ENCODE measurements at regions of chr19 and their contacts with region 1.

Region 1: GRCh38 chr19:44570984-44571684 is 41.7 kb upstream of the CEACAM20 start:
- DNase-seq: peak in 1 of 2 experiments; percentile 80
- H3K4me3 ChIP-seq: no peak overlapping the region
- H3K27ac ChIP-seq: no peak overlapping the region
- H3K4me1 ChIP-seq: no peaks in the 10 kb centered on the region
- H3K27me3 ChIP-seq: no peaks in the 10 kb centered on the region
- CTCF ChIP-seq: peak in 2 of 3 experiments; percentile 62 to 82; a peak in 3 of 4 replicates
- EP300 ChIP-seq: no peak
- POLR2A ChIP-seq: no peak
- RAD21 ChIP-seq: peak; percentile 80 to 89

Region 2: DNA sequence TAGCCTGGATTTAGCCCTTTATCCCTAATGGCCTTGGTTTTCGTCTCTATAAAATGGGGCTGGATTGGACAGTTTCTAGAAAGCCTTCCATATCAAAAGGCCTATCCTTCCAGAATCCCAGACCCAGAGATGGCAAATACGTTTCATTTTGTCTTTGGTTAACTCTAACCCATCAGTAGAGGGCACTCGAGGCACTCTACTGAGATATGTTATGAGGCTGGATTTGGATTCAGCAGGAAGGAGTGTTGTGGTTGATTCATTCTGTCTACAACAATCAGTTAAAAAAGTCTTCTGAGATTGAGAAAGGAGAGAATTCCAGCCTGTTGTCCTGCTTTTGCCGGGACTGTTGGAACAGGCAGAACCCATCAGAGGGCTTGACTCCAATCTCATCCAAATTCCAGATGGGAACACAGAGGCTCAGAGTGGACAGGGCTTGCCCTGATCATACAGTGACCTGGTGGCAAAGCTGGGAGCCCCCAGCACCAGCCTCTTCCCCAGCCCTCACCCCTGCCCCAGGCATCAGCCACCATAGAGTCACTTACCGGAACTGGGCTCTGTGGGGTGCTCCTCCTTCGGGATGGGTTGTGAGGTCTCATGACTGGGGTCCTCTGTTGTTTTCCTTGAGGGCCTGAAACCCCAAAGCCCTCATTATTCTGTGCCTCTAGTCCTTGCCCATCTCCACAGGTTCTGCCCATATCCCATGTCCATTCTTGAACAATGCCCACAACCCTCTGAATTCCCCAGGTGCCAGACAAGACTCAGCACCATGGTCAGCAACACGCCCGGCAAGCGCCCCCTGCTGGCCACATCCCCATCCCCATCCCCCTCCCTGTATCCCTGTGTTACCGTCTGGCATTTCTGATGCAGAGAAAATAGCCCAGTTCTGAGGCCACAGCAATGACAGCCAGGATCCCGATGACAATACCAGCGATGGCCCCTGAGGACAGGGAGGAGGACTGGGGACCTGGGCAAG is 58.5 kb before region 1 on chr19:
- CTCF ChIA-PET with region 1: no interaction called
- POLR2A ChIA-PET with region 1: no interaction called
- DNase-seq: peak; percentile 31 to 87
- H3K4me3 ChIP-seq: no peak overlapping the region
- H3K27ac ChIP-seq: no peak overlapping the region
- H3K4me1 ChIP-seq: no peaks in the 10 kb centered on the region
- H3K27me3 ChIP-seq: no peaks in the 10 kb centered on the region
- CTCF ChIP-seq: peak; percentile 68 to 89 (median 69)
- EP300 ChIP-seq: no peak
- POLR2A ChIP-seq: no peak
- RAD21 ChIP-seq: peak; percentile 41 to 61

Region 3: GRCh38 chr19:44552324-44552723 is 18.8 kb before region 1 on chr19:
- CTCF ChIA-PET with region 1: interaction called, 14 read pairs
- POLR2A ChIA-PET with region 1: no interaction called
- DNase-seq: peak; percentile 70 to 95
- H3K4me3 ChIP-seq: no peak overlapping the region
- H3K27ac ChIP-seq: no peak overlapping the region
- H3K4me1 ChIP-seq: no peaks in the 10 kb centered on the region
- H3K27me3 ChIP-seq: no peaks in the 10 kb centered on the region
- CTCF ChIP-seq: peak; percentile 87 to 99 (median 98)
- EP300 ChIP-seq: no peak
- POLR2A ChIP-seq: no peak
- RAD21 ChIP-seq: peak; percentile 63 to 74

Region 4: DNA sequence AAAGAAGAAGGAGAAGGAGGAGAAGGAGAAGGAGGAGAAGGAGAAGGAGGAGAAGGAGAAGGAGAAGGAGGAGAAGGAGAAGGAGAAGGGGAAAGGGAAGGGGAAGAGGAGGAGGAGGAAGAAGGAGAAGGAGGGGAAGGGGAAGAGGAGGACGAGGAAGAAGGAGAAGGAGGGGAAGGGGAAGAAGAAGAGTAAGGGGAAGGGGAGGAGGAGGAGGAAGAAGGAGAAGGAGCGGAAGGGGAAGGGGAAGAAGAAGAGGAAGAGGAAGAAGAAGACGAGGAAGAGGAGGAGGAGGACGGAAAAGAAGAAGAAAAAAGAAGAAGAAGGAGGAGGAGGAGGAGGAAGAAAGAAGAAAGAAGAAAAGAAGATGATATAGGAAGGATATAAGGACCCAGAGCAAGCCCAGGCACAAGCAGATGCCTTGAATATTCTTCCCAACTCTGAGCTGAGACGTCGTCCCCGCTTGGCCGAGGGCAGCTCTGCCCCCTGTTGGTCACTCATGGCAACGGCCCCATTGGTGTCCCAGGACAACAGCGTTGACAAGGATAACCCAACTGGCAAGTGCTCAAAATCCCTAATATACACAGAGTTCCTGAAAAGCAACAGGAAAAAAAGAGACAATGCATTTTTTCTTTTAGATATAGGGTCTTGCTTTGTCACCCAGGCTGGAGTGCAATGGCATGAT is 11.6 kb after region 1 on chr19:
- CTCF ChIA-PET with region 1: interaction called, 37 read pairs
- POLR2A ChIA-PET with region 1: interaction called, 5 read pairs
- DNase-seq: peak; percentile 50 to 91
- H3K4me3 ChIP-seq: no peak overlapping the region
- H3K27ac ChIP-seq: no peak overlapping the region
- H3K4me1 ChIP-seq: no peaks in the 10 kb centered on the region
- H3K27me3 ChIP-seq: no peaks in the 10 kb centered on the region
- CTCF ChIP-seq: peak; percentile 89 to 98 (median 97)
- EP300 ChIP-seq: no peak
- POLR2A ChIP-seq: no peak
- RAD21 ChIP-seq: peak; percentile 64 to 70

Region 5: DNA sequence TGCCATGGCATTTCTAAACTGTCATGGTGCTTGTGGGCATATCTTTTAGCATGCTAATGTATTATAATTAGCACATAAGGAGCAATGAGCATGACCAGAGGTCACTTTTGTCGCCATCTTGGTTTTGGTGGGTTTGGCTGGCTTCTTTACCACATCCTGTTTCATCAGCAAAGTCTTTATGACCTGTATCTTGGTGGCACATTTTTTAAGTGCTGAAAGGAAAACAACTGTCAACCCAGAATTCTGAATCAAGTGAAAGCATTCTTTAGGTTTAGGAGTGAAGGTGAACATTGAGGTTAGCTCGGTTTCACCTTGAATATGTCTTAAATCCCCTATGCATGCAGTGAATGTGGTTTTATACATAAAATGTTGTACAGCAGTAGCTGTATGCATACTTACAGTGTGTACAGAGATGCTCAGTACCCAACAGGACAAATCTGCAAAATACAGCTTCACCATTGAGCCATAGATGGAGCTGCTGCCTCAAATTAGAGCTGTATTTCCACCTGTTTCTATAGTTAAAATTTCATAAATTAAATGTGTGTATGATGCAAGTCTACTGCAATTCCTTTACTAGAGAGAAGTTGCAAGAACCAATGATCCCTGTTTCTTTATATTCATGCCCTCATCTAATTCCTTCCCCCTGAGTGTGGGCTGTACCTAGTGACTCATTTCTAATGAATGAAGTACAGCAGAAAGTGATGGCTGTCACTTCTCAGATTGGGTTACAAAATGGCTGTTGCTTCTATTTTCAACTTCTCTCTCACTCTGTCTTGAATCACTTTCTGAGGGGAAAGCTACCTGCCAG is 17.0 kb after region 1 on chr19:
- CTCF ChIA-PET with region 1: interaction called, 37 read pairs
- POLR2A ChIA-PET with region 1: interaction called, 5 read pairs
- DNase-seq: no peak
- H3K4me3 ChIP-seq: no peak overlapping the region
- H3K27ac ChIP-seq: no peak overlapping the region
- H3K4me1 ChIP-seq: no peaks in the 10 kb centered on the region
- H3K27me3 ChIP-seq: no peaks in the 10 kb centered on the region
- CTCF ChIP-seq: no peak
- EP300 ChIP-seq: no peak
- POLR2A ChIP-seq: no peak
- RAD21 ChIP-seq: 0 out of 4 replicates have a peak, but pooled peaks of 1 of the 2 experiments have one; percentile 7

Region 6: GRCh38 chr19:44617481-44617880 is 46.3 kb after region 1 on chr19:
- CTCF ChIA-PET with region 1: interaction called, 13 read pairs
- POLR2A ChIA-PET with region 1: no interaction called
- DNase-seq: no peak
- H3K4me3 ChIP-seq: no peak overlapping the region
- H3K27ac ChIP-seq: no peak overlapping the region
- H3K4me1 ChIP-seq: no peaks in the 10 kb centered on the region
- H3K27me3 ChIP-seq: no peaks in the 10 kb centered on the region
- CTCF ChIP-seq: no peak
- EP300 ChIP-seq: no peak
- POLR2A ChIP-seq: no peak
- RAD21 ChIP-seq: no peak

Region 7: GRCh38 chr19:44626048-44626624 is 55.0 kb after region 1 on chr19:
- CTCF ChIA-PET with region 1: interaction called, 10 read pairs
- POLR2A ChIA-PET with region 1: no interaction called
- DNase-seq: no peak
- H3K4me3 ChIP-seq: no peak overlapping the region
- H3K27ac ChIP-seq: no peak overlapping the region
- H3K4me1 ChIP-seq: no peaks in the 10 kb centered on the region
- H3K27me3 ChIP-seq: no peaks in the 10 kb centered on the region; a peak in 1 of 7 replicates
- CTCF ChIP-seq: no peak
- EP300 ChIP-seq: no peak
- POLR2A ChIP-seq: no peak
- RAD21 ChIP-seq: no peak

Region 8: GRCh38 chr19:44643605-44644401 is 72.7 kb after region 1 on chr19 and contains the start of gene PVR:
- CTCF ChIA-PET with region 1: interaction called, 25 read pairs
- POLR2A ChIA-PET with region 1: interaction called, 3 read pairs
- DNase-seq: peak; percentile 29 to 77
- H3K4me3 ChIP-seq: peak within 1 kb of the TSS; percentile 54 to 99 (median 74)
- H3K27ac ChIP-seq: no peak within 1 kb of the TSS; the same call in 1 of the 2 replicates
- H3K4me1 ChIP-seq: peaks cover 0 to 2% (median under 1%) of the 10 kb centered on the region in 4 experiments; a peak in 2 of 7 replicates
- H3K27me3 ChIP-seq: peaks cover 0 to 8% (median 6%) of the 10 kb centered on the region in 4 experiments; a peak in 6 of 7 replicates
- CTCF ChIP-seq: no peak
- EP300 ChIP-seq: no peak
- POLR2A ChIP-seq: peak in 1 of 2 experiments; percentile 20; a peak in 1 of 3 replicates
- RAD21 ChIP-seq: no peak
- total RNA-seq, gene PVR: 13.3 and 14.1 TPM in 2 replicates